CD4-positive, alpha-beta memory T cell (primary cell): ENCODE measurements at regions of chr11 and their contacts with region 1.

Region 1: GRCh38 chr11:65477149-65477965 is 21.5 kb upstream of the MALAT1 start:
- DNase-seq: peak; percentile 78 to 90 (median 82)
- H3K4me3 ChIP-seq: peak overlapping the region; percentile 90 to 93
- H3K4me3 Mint-ChIP-seq: peak overlapping the region; percentile 95 to 100 (median 100)
- H3K27ac ChIP-seq: peak overlapping the region; percentile 93
- H3K27ac Mint-ChIP-seq: peak overlapping the region; percentile 97 to 100 (median 99)
- H3K4me1 ChIP-seq: peaks cover 20% of the 10 kb centered on the region
- H3K4me1 Mint-ChIP-seq: peaks cover 10 to 26% (median 17%) of the 10 kb centered on the region in 4 donors
- H3K27me3 ChIP-seq: no peaks in the 10 kb centered on the region
- H3K27me3 Mint-ChIP-seq: no peaks in the 10 kb centered on the region

Region 2: GRCh38 chr11:65425105-65425970 is 52.0 kb before region 1 on chr11:
- CTCF ChIA-PET with region 1: interaction called, 3 read pairs
- POLR2A ChIA-PET with region 1: interaction called, 679 read pairs
- intact Hi-C with region 1: loop called (anchors 2 kb)
- DNase-seq: peak; percentile 87 to 98 (median 94)
- H3K4me3 ChIP-seq: peak overlapping the region; percentile 95 to 99
- H3K4me3 Mint-ChIP-seq: peak overlapping the region; percentile 92 to 97 (median 95)
- H3K27ac ChIP-seq: peak overlapping the region; percentile 98
- H3K27ac Mint-ChIP-seq: peak overlapping the region; percentile 93 to 100 (median 97)
- H3K4me1 ChIP-seq: peaks cover 50% of the 10 kb centered on the region
- H3K4me1 Mint-ChIP-seq: peaks cover 41 to 83% (median 47%) of the 10 kb centered on the region in 4 donors
- H3K27me3 ChIP-seq: no peaks in the 10 kb centered on the region
- H3K27me3 Mint-ChIP-seq: peaks cover 0 to 4% of the 10 kb centered on the region in 2 donors

Region 3: DNA sequence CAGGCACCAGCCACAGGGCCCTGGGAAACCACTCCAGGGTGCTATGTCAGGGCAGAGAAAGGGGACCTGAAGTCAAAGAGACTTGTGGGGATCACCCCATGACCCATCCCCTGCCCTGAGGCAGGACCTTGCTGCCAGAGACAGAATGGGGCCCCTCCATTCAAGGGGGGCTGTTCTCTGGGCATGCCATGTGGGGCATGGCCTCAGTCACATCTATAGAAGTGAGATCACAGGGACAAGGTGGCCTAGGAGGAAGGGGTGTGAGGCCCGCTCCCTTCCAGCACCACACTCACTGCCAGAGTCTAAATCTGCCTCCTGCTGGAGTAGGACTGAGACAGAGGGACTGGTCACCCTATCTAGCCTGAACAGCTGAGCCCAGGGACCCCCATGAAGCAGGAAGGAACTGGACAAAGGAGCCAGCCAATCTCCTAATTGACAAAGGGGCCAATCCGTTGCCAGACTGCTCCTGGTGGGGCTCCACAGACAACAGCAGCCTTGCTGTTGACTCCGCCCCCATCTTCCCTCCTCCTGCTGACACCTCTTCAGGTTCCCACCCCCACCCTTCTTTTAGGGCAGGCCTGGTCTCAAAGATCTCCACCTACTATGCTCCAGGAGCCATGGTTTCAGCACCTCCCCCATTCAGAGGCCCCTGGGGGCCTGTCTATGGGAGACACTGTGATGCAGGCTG is 28.8 kb before region 1 on chr11:
- CTCF ChIA-PET with region 1: interaction called, 3 read pairs
- POLR2A ChIA-PET with region 1: interaction called, 23 read pairs
- intact Hi-C with region 1: no loop called
- DNase-seq: peak in 1 of 5 donors; percentile 33
- H3K4me3 ChIP-seq: no peak overlapping the region
- H3K4me3 Mint-ChIP-seq: no peak overlapping the region
- H3K27ac ChIP-seq: no peak overlapping the region
- H3K27ac Mint-ChIP-seq: peak overlapping the region in 5 of 7 donors; percentile 38 to 64 (median 53)
- H3K4me1 ChIP-seq: no peaks in the 10 kb centered on the region
- H3K4me1 Mint-ChIP-seq: peaks cover 3 to 17% (median 4%) of the 10 kb centered on the region in 4 donors
- H3K27me3 ChIP-seq: no peaks in the 10 kb centered on the region
- H3K27me3 Mint-ChIP-seq: no peaks in the 10 kb centered on the region

Region 4: DNA sequence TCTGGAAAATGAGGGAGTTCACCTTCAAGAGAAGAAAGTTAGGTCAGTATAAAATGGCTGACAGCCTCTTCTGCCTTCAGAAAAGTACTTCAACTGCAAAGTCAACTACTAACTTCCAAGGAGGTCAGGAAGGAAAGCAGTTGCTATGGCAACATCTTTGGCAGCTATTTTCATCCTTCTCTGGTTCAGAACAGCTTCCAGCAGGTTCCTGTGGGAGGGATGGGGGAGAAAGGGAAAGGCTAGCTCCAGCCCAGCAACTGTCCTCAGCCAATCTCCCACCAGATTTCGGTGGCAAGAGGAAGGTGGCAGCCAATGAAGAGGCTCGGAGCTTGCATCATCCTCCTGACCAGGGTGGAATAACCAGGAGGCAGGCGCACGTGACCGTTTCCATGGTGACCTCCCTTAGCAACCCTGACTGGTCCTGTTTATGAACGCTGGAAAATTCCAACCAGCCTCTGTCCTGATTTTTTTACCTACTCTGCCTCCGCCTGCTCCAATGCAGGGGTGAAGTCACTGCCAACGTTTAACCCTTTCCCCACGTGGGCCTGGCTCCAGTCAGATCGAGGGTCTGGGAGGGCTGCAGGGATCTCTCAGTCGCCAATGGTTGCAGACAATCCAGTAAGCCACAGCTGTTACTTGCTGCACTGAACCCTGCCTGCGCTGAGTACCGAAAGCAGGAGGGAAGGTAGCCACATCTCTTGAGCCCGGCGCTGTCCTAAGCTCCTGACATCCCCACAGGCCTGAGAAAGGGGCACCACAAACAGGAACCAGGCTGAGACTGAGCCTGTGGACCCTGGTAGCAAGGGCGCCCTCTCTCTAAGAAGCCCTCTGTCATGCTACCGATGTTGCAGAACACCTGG is 10.3 kb after region 1 on chr11:
- CTCF ChIA-PET with region 1: interaction called, 13 read pairs
- POLR2A ChIA-PET with region 1: interaction called, 1,536 read pairs
- intact Hi-C with region 1: no loop called
- DNase-seq: peak in 1 of 5 donors; percentile 36
- H3K4me3 ChIP-seq: no peak overlapping the region
- H3K4me3 Mint-ChIP-seq: peak overlapping the region in 1 of 8 donors; percentile 45
- H3K27ac ChIP-seq: no peak overlapping the region
- H3K27ac Mint-ChIP-seq: peak overlapping the region in 1 of 7 donors; percentile 2
- H3K4me1 ChIP-seq: peaks cover 6% of the 10 kb centered on the region
- H3K4me1 Mint-ChIP-seq: peaks cover 0 to 10% (median 7%) of the 10 kb centered on the region in 4 donors
- H3K27me3 ChIP-seq: no peaks in the 10 kb centered on the region
- H3K27me3 Mint-ChIP-seq: peaks cover 0 to 1% of the 10 kb centered on the region in 2 donors

Region 5: DNA sequence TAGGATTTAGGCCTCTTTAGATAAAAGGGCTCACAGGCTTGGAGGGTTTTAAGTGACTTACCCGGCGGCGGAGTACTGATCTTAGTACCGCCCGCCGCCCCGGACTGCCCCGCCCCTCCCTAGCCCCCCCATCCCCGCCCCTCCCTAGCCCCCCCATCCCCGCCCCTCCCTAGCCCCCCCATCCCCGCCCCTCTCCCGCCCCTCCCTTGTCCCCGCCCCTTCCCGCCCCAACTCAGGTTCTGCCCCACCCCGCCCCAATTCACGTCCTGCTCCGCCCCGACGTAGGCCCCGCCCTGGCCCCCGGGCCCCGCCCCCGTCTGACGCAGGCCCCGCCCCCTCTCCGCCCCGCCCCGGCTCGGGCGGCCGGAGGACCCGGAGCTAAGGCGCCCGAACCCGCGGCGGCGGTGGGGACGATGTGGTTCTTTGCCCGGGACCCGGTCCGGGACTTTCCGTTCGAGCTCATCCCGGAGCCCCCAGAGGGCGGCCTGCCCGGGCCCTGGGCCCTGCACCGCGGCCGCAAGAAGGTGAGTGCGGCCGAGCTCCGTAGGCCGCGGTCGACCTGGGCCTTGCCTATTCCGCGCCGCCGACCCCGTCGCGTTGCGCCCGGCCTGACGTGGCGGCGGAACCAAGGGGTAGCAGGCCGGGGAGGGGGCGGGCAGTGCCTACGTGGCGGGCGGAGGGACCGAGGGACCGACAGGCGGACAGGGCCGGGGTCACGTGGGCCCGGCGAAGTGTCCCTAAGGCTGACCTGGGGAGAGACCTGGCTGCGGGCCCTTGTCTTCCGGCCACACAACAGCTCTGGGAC is 47.6 kb after region 1 on chr11 and contains the start of gene SCYL1:
- CTCF ChIA-PET with region 1: no interaction called
- POLR2A ChIA-PET with region 1: interaction called, 14 read pairs
- intact Hi-C with region 1: no loop called
- DNase-seq: peak; percentile 72 to 82 (median 75)
- H3K4me3 ChIP-seq: peak within 1 kb of the TSS; percentile 78 to 83
- H3K4me3 Mint-ChIP-seq: peak within 1 kb of the TSS; percentile 81 to 92 (median 88)
- H3K27ac ChIP-seq: peak within 1 kb of the TSS; percentile 84
- H3K27ac Mint-ChIP-seq: peak within 1 kb of the TSS; percentile 81 to 98 (median 94)
- H3K4me1 ChIP-seq: peaks cover 54% of the 10 kb centered on the region
- H3K4me1 Mint-ChIP-seq: peaks cover 35 to 63% (median 49%) of the 10 kb centered on the region in 4 donors
- H3K27me3 ChIP-seq: no peaks in the 10 kb centered on the region
- H3K27me3 Mint-ChIP-seq: no peaks in the 10 kb centered on the region
- total RNA-seq, gene SCYL1: 72.5 to 81.3 TPM

Region 6: GRCh38 chr11:65781152-65781962 is 304.0 kb after region 1 on chr11:
- CTCF ChIA-PET with region 1: no interaction called
- POLR2A ChIA-PET with region 1: no interaction called
- intact Hi-C with region 1: no loop called
- DNase-seq: no peak
- H3K4me3 ChIP-seq: no peak overlapping the region
- H3K4me3 Mint-ChIP-seq: peak overlapping the region in 2 of 8 donors; percentile 31 to 32
- H3K27ac ChIP-seq: no peak overlapping the region
- H3K27ac Mint-ChIP-seq: no peak overlapping the region
- H3K4me1 ChIP-seq: peaks cover 31% of the 10 kb centered on the region
- H3K4me1 Mint-ChIP-seq: peaks cover 11 to 32% (median 22%) of the 10 kb centered on the region in 4 donors
- H3K27me3 ChIP-seq: no peaks in the 10 kb centered on the region
- H3K27me3 Mint-ChIP-seq: peaks cover 0 to 2% of the 10 kb centered on the region in 2 donors